Aorta (tissue), 5 donors: ENCODE measurements at regions of chr11 and their contacts with region 1.

Region 1: DNA sequence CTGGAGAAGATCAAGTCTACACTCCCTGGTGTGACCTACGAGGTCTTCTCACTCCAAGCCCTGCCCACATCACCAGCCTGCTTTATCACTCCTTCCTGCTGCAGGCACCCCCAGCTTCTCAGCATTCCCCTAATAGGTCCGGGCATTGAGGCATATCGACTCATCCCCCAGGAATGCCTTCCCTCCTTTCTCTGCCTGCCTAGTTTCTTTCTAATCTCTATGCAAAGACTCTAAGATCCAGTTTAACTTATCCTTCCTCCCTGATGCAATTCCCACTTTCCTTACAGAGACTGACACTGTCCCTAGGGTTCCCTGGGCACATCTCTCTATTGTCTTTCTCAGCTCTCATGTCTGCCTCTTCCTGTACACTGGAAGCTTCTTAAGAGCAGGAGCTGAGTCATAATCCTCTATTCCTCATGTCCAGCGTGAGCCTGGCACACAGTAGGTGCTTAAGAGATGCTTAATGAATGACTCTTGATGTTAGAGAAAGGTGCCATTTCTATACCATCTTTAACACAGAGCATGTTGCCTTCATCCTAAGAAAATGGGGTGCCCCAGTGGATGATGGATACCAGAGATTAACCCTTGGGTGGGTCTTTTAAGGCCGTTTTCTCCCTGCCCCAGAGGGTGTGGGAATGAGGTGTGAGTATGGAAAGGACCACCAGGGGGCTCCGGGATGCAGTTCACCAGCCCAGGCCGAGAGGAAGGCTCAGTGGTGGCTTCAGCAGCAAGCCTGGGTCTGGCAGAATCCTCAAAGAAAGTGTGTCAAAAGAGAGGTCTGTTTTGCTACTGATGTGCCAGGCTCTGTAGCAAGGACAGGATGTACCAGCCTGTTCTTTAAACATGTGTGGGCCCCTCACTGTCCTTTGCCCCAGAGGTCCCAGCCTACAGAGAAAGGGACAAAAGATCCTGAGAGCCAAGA is 34.7 kb downstream of the PARVA start:
- DNase-seq: peak; percentile 75 to 84
- ATAC-seq: peak; percentile 87
- H3K4me3 ChIP-seq: no peak overlapping the region
- H3K27ac ChIP-seq: peak overlapping the region; percentile 84 to 85
- H3K4me1 ChIP-seq: peaks cover 9 to 17% of the 10 kb centered on the region in 2 donors
- H3K27me3 ChIP-seq: no peaks in the 10 kb centered on the region

Region 2: GRCh38 chr11:12377824-12378593 is 34.1 kb before region 1 on chr11:
- intact Hi-C with region 1: loop called in 1 of 2 experiments (anchors 5 kb)
- DNase-seq: peak; percentile 88 to 94
- ATAC-seq: peak; percentile 80
- H3K4me3 ChIP-seq: peak overlapping the region; percentile 62 to 95
- H3K27ac ChIP-seq: peak overlapping the region; percentile 89 to 99
- H3K4me1 ChIP-seq: peaks cover 0 to 4% of the 10 kb centered on the region in 2 donors
- H3K27me3 ChIP-seq: no peaks in the 10 kb centered on the region

Region 3: DNA sequence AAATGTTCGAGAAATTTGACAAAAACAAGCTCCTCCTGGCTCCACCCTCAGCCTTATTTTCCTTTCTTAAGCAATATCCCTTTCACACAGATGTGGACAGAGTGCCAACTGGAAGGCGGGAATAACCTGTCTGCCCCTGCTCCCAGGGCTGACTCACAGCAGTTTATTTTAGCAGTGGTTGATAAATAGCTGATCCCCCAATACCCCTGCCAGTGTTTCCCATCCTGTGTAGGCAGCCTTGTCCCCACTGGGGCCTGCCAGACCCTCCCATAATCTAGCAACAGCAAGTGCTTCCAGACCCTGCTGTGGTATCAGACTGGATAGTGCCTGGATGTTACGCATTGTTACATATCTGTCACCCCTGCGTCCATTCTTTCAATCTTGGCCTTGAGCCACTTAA is 18.9 kb after region 1 on chr11:
- intact Hi-C with region 1: no loop called
- DNase-seq: peak; percentile 83 to 85
- ATAC-seq: peak; percentile 78
- H3K4me3 ChIP-seq: no peak overlapping the region
- H3K27ac ChIP-seq: peak overlapping the region; percentile 69 to 80
- H3K4me1 ChIP-seq: peaks cover 15 to 23% of the 10 kb centered on the region in 2 donors
- H3K27me3 ChIP-seq: no peaks in the 10 kb centered on the region

Region 4: GRCh38 chr11:12461516-12461915 is 49.4 kb after region 1 on chr11:
- intact Hi-C with region 1: loop called in 1 of 2 experiments (anchors 5 kb)
- DNase-seq: no peak
- ATAC-seq: no peak
- H3K4me3 ChIP-seq: no peak overlapping the region
- H3K27ac ChIP-seq: no peak overlapping the region
- H3K4me1 ChIP-seq: peaks cover 6 to 19% of the 10 kb centered on the region in 2 donors
- H3K27me3 ChIP-seq: no peaks in the 10 kb centered on the region